ENCODE measurements at regions of chr11 and their contacts with region 1.

Region 1: GRCh38 chr11:119728651-119729580 is at the start of gene NECTIN1:
- DNase-seq: peak; percentile 85
- H3K4me3 Mint-ChIP-seq: peak within 1 kb of the TSS; percentile 66
- H3K27ac Mint-ChIP-seq: no peak within 1 kb of the TSS
- H3K4me1 Mint-ChIP-seq: peaks cover 9% of the 10 kb centered on the region
- H3K27me3 Mint-ChIP-seq: peaks cover 51% of the 10 kb centered on the region
- total RNA-seq, gene NECTIN1: 0.21 to 0.30 TPM

Region 2: GRCh38 chr11:119673759-119674336 is 55.1 kb before region 1 on chr11:
- CTCF ChIA-PET with region 1: interaction called, 11 read pairs
- POLR2A ChIA-PET with region 1: no interaction called
- DNase-seq: peak; percentile 36
- H3K4me3 Mint-ChIP-seq: no peak overlapping the region
- H3K27ac Mint-ChIP-seq: no peak overlapping the region
- H3K4me1 Mint-ChIP-seq: peaks cover 9% of the 10 kb centered on the region
- H3K27me3 Mint-ChIP-seq: no peaks in the 10 kb centered on the region

Region 3: GRCh38 chr11:119684361-119685110 is 44.4 kb before region 1 on chr11:
- CTCF ChIA-PET with region 1: interaction called, 13 read pairs
- POLR2A ChIA-PET with region 1: no interaction called
- DNase-seq: no peak
- H3K4me3 Mint-ChIP-seq: no peak overlapping the region
- H3K27ac Mint-ChIP-seq: no peak overlapping the region
- H3K4me1 Mint-ChIP-seq: peaks cover 6% of the 10 kb centered on the region
- H3K27me3 Mint-ChIP-seq: peaks cover 13% of the 10 kb centered on the region

Region 4: DNA sequence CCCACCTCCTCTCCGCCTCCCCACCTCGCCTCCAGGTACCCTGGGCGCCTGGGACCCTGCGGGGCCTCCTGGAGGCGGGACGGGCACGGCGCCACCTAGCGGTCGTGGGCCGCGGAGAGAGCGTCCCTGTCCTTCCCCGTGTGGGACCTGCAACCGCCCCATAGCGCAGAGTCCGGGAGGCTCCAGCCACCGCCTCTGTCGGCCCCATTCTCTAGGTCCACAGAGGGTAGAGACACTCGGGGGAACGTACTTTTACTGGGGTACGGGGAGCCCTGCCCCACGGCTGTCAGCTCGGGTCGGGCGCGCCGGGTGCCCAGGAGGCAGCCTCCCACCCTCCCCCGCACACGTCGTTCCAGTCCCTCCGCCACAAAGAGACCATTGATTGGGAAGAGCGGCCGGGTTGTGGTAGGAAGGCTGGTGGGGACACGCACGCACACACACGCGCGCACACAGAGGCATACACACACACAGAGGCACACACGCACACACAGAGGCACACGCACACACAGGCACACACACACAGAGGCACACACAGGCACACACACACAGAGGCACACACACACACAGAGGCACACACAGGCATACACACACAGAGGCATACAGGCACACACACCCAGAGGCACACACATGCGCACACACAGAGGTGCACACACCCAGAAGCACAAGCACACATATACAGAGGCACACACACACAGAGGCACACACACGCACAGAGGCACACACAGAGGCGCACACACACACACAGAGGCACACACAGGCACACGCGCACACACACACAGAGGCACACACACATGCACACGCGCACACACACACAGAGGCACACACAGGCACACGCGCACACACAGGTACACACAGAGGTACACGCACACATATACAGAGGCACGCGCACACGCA is 12.7 kb after region 1 on chr11:
- CTCF ChIA-PET with region 1: interaction called, 16 read pairs
- POLR2A ChIA-PET with region 1: no interaction called
- DNase-seq: peak; percentile 35
- H3K4me3 Mint-ChIP-seq: no peak overlapping the region
- H3K27ac Mint-ChIP-seq: no peak overlapping the region
- H3K4me1 Mint-ChIP-seq: no peaks in the 10 kb centered on the region
- H3K27me3 Mint-ChIP-seq: peaks cover 44% of the 10 kb centered on the region

Region 5: GRCh38 chr11:120040151-120040840 is 311.4 kb after region 1 on chr11:
- CTCF ChIA-PET with region 1: no interaction called
- POLR2A ChIA-PET with region 1: no interaction called
- DNase-seq: no peak
- H3K4me3 Mint-ChIP-seq: no peak overlapping the region
- H3K27ac Mint-ChIP-seq: no peak overlapping the region
- H3K4me1 Mint-ChIP-seq: no peaks in the 10 kb centered on the region
- H3K27me3 Mint-ChIP-seq: peaks cover 10% of the 10 kb centered on the region